GM12878 (cell line): ENCODE measurements at regions of chr4 and their contacts with region 1.

Region 1: DNA sequence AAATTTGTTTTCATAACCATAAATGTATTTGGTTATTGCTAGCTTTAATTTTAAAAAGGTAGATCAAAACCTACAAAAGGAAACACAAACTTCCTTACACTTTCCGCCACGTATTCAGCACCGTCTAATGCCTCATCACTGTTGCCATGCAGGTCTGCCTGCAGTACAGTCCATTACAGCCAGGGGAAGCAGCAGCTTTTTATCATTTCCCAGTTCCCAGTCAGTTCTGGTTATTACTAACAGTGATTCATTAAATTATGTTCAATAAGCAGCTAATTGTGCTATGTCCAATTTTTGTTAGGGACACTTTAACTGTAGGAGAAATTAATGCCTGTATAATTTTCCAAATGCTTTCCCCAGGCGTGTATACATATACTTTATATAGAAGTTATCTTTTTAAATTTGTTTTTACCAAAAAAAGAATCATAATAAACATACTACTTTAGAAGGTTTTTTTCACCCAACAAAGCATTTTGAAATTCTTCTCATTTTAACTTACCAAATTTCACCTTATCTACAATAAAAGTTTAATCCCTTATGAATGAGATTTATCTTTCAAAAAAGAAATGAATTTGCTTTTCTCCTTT is 93.3 kb downstream of the ANXA3 start:
- DNase-seq: no peak
- ATAC-seq: peak; percentile 92
- H3K4me3 ChIP-seq: no peak overlapping the region
- H3K27ac ChIP-seq: no peak overlapping the region
- H3K4me1 ChIP-seq: peaks cover 29% of the 10 kb centered on the region
- H3K27me3 ChIP-seq: no peaks in the 10 kb centered on the region
- CTCF ChIP-seq: peak; percentile 78 to 92 (median 92)
- EP300 ChIP-seq: no peak
- POLR2A ChIP-seq: no peak
- RAD21 ChIP-seq: peak; percentile 87

Region 2: GRCh38 chr4:78622253-78622979 is 22.4 kb before region 1 on chr4:
- CTCF ChIA-PET with region 1: interaction called, 10 read pairs
- POLR2A ChIA-PET with region 1: interaction called, 6 read pairs
- RAD21 ChIA-PET with region 1: interaction called, 79 read pairs
- SMC1A ChIA-PET with region 1: interaction called, 99 read pairs
- in situ Hi-C with region 1: no loop called
- intact Hi-C with region 1: no loop called
- DNase-seq: no peak
- ATAC-seq: no peak
- H3K4me3 ChIP-seq: no peak overlapping the region
- H3K27ac ChIP-seq: no peak overlapping the region
- H3K4me1 ChIP-seq: peaks cover 12% of the 10 kb centered on the region; the same call in 1 of the 2 replicates
- H3K27me3 ChIP-seq: no peaks in the 10 kb centered on the region
- CTCF ChIP-seq: no peak
- EP300 ChIP-seq: no peak
- POLR2A ChIP-seq: no peak
- RAD21 ChIP-seq: no peak

Region 3: DNA sequence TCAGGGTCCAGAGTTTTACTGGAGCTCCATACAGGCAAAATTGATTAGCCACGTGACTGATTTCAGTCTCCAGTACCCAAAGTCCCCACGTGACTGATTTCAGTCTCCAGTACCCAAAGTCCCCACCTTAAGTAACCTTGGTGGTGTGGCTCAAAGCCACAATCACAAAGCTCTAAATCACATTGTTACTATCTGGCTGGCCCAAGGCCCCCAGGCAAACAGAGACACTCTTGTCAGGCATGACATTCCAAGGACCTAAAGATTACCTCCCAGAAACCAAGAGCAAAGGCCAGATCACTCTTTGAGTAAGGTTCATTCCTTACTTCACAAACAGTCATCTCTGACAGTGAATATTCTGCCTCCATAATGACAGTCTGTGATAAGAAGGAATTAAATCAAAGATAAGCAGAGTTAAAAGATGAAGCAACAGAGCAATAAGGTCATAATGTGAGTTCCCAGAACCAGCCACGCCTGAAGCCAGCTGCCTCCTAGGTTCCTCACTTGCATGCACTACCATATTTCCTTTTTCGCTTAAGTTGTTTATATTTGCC is 14.8 kb before region 1 on chr4:
- CTCF ChIA-PET with region 1: interaction called, 27 read pairs
- POLR2A ChIA-PET with region 1: interaction called, 6 read pairs
- RAD21 ChIA-PET with region 1: interaction called, 79 read pairs
- SMC1A ChIA-PET with region 1: interaction called, 99 read pairs
- in situ Hi-C with region 1: no loop called
- intact Hi-C with region 1: no loop called
- DNase-seq: no peak
- ATAC-seq: peak; percentile 27
- H3K4me3 ChIP-seq: no peak overlapping the region
- H3K27ac ChIP-seq: no peak overlapping the region
- H3K4me1 ChIP-seq: peaks cover 39% of the 10 kb centered on the region
- H3K27me3 ChIP-seq: no peaks in the 10 kb centered on the region
- CTCF ChIP-seq: no peak
- EP300 ChIP-seq: no peak
- POLR2A ChIP-seq: no peak
- RAD21 ChIP-seq: no peak

Region 4: GRCh38 chr4:78656968-78657445 is 12.2 kb after region 1 on chr4:
- CTCF ChIA-PET with region 1: interaction called, 15 read pairs
- POLR2A ChIA-PET with region 1: interaction called, 4 read pairs
- RAD21 ChIA-PET with region 1: interaction called, 14 read pairs
- SMC1A ChIA-PET with region 1: interaction called, 18 read pairs
- in situ Hi-C with region 1: no loop called
- intact Hi-C with region 1: no loop called
- DNase-seq: no peak
- ATAC-seq: peak; percentile 25
- H3K4me3 ChIP-seq: peak overlapping the region; percentile 39
- H3K27ac ChIP-seq: peak overlapping the region; percentile 28; the same call in 1 of the 2 replicates
- H3K4me1 ChIP-seq: peaks cover 34% of the 10 kb centered on the region
- H3K27me3 ChIP-seq: no peaks in the 10 kb centered on the region
- CTCF ChIP-seq: no peak
- EP300 ChIP-seq: peak; percentile 47 to 76; a peak in 2 of 4 replicates
- POLR2A ChIP-seq: no peak
- RAD21 ChIP-seq: 0 out of 2 replicates have a peak, but pooled peaks have one; percentile 7

Region 5: DNA sequence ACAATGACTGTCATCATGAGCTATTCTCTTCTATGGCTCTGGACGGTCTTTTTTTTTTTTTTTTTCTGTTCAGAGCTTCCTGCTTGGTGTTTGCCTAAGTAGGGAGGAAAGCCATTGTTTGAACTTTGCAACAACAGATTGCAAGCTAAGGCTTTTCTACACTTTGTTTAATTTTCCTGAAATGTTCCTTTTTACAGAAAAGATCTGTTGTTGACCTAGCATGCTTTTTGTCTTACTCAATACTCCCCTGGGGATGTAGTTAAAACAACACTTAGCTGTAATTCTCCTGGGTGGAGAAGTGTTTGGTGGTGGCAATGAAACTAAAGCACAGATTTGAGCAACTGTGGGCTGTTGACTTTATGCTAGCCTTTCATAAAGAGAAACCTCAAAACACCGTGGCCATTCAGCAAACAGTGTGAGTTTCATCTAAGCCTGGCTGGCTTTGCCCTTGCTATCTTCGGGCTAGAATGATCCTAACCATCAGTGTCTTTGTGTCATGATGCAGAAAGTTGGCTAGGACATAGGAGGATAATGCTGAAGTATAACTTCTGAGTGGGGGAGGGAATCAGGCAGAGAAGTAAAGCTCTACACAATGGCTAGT is 17.2 kb after region 1 on chr4:
- CTCF ChIA-PET with region 1: interaction called, 15 read pairs
- POLR2A ChIA-PET with region 1: no interaction called
- RAD21 ChIA-PET with region 1: interaction called, 14 read pairs
- SMC1A ChIA-PET with region 1: interaction called, 18 read pairs
- in situ Hi-C with region 1: no loop called
- intact Hi-C with region 1: no loop called
- DNase-seq: peak; percentile 77
- ATAC-seq: peak; percentile 90
- H3K4me3 ChIP-seq: no peak overlapping the region
- H3K27ac ChIP-seq: no peak overlapping the region
- H3K4me1 ChIP-seq: peaks cover 33% of the 10 kb centered on the region
- H3K27me3 ChIP-seq: peaks cover 0 to 1% of the 10 kb centered on the region in 2 experiments; a peak in 1 of 4 replicates
- CTCF ChIP-seq: no peak
- EP300 ChIP-seq: peak in 1 of 2 experiments; percentile 64; a peak in 1 of 4 replicates
- POLR2A ChIP-seq: no peak
- RAD21 ChIP-seq: no peak

Region 6: GRCh38 chr4:78766650-78767049 is 121.8 kb after region 1 on chr4:
- CTCF ChIA-PET with region 1: interaction called, 4 read pairs
- POLR2A ChIA-PET with region 1: no interaction called
- RAD21 ChIA-PET with region 1: interaction called, 11 read pairs
- SMC1A ChIA-PET with region 1: interaction called, 6 read pairs
- in situ Hi-C with region 1: no loop called
- intact Hi-C with region 1: no loop called
- DNase-seq: no peak
- ATAC-seq: peak; percentile 92
- H3K4me3 ChIP-seq: peak overlapping the region; percentile 14; the same call in 1 of the 2 replicates
- H3K27ac ChIP-seq: no peak overlapping the region
- H3K4me1 ChIP-seq: peaks cover 27% of the 10 kb centered on the region
- H3K27me3 ChIP-seq: no peaks in the 10 kb centered on the region
- CTCF ChIP-seq: no peak
- EP300 ChIP-seq: no peak
- POLR2A ChIP-seq: no peak
- RAD21 ChIP-seq: no peak

Region 7: GRCh38 chr4:78775303-78776030 is 130.6 kb after region 1 on chr4:
- CTCF ChIA-PET with region 1: interaction called, 24 read pairs
- POLR2A ChIA-PET with region 1: interaction called, 5 read pairs
- RAD21 ChIA-PET with region 1: interaction called, 5 read pairs
- SMC1A ChIA-PET with region 1: interaction called, 23 read pairs
- in situ Hi-C with region 1: no loop called
- intact Hi-C with region 1: loop called (anchors 5 kb)
- DNase-seq: no peak
- ATAC-seq: peak; percentile 65
- H3K4me3 ChIP-seq: peak overlapping the region; percentile 99
- H3K27ac ChIP-seq: peak overlapping the region; percentile 80
- H3K4me1 ChIP-seq: peaks cover 20% of the 10 kb centered on the region
- H3K27me3 ChIP-seq: no peaks in the 10 kb centered on the region
- CTCF ChIP-seq: no peak
- EP300 ChIP-seq: peak in 1 of 2 experiments; percentile 58; a peak in 1 of 4 replicates
- POLR2A ChIP-seq: no peak
- RAD21 ChIP-seq: no peak